ENCODE measurements at regions of chr5 and their contacts with region 1.

Region 1: DNA sequence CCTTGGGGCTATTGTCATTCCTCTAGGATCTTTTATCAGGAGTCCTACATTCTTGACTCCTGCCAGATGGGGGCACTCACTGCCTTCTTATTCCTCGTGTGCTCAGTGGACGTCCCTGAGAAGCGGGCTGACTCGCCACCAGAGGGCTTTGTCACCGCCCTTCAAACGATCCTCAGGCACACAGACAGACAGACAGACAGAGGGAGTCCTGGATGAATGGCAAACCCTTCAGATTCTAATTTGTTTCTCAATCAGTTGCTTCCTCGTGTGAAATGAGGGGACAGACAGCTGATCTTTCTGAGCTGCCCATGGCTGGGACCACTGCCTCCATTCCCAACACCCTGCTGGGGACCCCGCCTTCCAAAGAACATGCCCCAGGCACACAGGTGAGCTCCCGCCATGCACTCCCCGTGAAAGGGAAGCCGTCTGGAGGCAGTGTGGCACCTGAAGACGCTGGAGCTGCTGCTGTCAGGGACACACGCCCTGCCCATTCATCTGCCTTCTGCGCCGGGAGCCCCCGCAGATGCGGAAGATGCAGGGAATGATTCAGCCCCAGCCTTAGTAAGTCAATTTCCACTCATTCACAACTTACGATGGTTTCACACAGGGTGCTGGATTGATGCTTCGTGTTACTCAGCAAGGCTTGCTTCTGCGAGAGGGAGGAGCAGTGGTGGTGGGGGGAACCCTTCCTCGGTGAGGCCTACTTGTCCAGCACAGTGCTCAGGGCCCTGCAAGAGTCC is 24.9 kb upstream of the SH3PXD2B start:
- DNase-seq: peak; percentile 89 to 91
- ATAC-seq: peak; percentile 93
- H3K4me3 ChIP-seq: no peak overlapping the region
- H3K27ac ChIP-seq: no peak overlapping the region
- H3K4me1 ChIP-seq: no peaks in the 10 kb centered on the region
- H3K27me3 ChIP-seq: no peaks in the 10 kb centered on the region

Region 2: DNA sequence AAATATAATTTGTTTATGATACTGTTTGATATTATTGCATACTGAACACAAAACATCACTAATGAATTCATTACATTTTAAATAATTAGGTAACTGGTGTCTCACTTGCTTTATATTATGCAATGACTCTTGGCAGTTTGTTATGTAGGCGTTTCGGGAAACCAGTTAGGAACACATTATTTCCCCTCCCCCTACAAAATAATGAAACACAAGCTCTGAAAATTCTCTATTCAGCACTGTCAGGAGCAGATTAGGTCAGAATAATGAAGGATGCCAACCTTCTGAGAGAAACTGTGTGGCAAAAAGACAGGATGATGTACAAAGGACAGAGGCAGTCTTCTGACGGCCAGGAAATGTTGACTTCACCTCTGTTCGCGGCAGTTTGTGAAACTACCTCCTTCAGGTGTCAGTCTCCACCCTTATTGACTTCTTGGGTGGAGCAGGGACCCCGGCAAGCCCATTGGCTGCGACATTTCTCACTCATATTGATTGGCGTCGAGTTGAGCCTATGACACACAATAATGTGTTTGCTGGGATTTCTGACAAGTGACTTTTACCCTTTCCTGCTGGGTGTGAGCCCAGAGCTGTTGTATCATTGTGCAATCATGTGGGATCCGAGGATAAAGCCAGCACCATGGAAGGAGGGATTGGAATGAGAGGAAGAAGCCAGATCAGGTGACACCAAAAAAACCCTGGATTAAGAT is 58.8 kb before region 1 on chr5:
- intact Hi-C with region 1: no loop called
- DNase-seq: peak; percentile 73 to 83
- ATAC-seq: peak; percentile 74
- H3K4me3 ChIP-seq: no peak overlapping the region
- H3K27ac ChIP-seq: peak overlapping the region in 1 of 2 donors; percentile 32
- H3K4me1 ChIP-seq: peaks cover 0 to 3% of the 10 kb centered on the region in 2 donors
- H3K27me3 ChIP-seq: no peaks in the 10 kb centered on the region

Region 3: GRCh38 chr5:172524573-172525021 is 45.4 kb after region 1 on chr5:
- intact Hi-C with region 1: no loop called
- DNase-seq: no peak
- ATAC-seq: no peak
- H3K4me3 ChIP-seq: no peak overlapping the region
- H3K27ac ChIP-seq: no peak overlapping the region
- H3K4me1 ChIP-seq: no peaks in the 10 kb centered on the region
- H3K27me3 ChIP-seq: no peaks in the 10 kb centered on the region

Region 4: DNA sequence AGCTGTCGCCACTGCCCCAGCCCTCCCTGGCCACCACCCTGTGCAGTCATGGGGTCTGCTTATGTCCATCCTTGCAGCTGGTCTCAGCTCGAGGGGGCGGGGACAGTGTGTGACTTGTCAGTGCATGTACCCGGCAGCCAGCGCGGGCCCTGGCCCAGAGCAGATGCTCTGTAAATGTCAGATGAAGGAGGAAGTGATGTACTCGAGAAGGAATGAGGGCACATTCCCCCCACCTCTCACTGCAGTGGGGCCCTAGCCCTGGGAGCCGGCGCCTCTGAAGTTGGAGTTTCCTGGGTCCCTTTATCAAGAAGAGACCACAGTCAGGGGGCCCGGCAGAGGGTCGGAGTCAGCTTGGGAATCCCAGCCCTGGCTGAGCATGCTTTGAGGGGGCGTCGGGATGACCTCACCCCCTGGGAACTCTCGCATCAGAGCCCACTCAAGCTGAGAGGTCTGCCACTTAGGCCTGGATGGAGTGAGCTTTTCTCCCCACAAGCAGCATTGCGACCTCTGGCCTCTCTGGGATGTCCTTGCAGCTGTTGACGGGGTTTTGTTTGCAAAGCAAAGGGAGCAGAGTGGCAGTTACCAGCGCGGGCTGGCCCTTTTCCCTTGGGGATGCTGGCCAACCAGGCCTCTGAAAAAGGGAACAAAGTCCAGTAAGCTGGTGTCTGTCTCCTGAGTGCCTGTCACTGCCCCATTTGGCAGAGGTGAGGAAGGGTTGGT is 180.9 kb after region 1 on chr5:
- intact Hi-C with region 1: loop called in 1 of 2 experiments (anchors 10 kb)
- DNase-seq: peak; percentile 94
- ATAC-seq: peak; percentile 86
- H3K4me3 ChIP-seq: no peak overlapping the region
- H3K27ac ChIP-seq: peak overlapping the region in 1 of 2 donors; percentile 61
- H3K4me1 ChIP-seq: no peaks in the 10 kb centered on the region
- H3K27me3 ChIP-seq: no peaks in the 10 kb centered on the region

Region 5: DNA sequence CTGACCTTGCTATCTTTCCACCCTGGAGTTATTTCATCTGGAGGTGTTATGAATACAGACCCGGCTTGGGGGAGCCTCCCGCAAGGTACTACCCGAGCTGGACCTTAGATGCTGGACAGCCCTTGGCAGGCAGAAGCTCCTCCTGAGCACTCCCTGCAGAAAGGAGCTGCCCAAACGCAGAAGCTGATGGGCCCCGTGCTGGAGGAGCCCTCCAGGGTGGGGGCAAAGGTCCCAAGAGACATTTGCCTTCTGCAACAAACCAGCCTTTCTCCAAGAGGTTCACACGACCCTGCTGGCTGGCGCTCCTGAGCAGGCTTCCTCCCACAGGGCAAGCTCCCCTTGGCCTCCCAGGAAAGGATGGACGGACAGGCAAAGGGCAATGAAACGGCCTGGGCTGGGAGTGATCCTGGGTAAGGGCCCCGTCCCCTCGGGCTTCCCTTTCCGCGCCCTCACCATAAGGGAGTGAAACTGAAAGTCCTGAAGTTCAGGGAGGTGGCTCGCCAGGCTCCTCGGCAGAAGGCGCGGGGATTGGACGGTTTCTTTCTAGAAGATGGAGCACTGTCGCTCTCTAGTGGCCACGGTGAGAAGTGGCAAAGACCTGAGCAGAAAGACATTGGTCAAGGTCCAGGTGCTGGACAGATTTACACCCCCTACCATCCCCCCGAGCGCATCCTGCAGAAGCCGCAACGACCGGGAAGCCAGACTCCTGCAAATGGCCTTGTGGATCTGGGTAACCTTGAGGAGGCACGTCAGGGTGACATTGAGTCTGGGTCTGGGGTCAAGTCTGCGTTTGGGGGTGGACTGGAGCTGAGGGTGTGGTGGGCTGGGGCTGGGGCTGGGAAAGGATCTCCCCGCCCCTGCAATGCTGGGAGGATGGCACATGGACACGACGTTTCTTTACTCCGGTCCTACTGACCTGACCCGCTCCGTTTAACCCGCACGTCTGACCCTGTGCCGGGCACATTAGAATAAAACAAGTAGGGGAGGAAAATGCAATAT is 218.2 kb after region 1 on chr5:
- intact Hi-C with region 1: loop called (anchors 1 kb)
- DNase-seq: peak; percentile 94
- ATAC-seq: peak; percentile 93
- H3K4me3 ChIP-seq: peak overlapping the region in 1 of 2 donors; percentile 56
- H3K27ac ChIP-seq: no peak overlapping the region
- H3K4me1 ChIP-seq: no peaks in the 10 kb centered on the region
- H3K27me3 ChIP-seq: no peaks in the 10 kb centered on the region

Measured in aorta (tissue), 5 donors.